ENCODE measurements at regions of chr1 and their contacts with region 1.

Region 1: GRCh38 chr1:87131809-87132283 is 196.8 kb upstream of the LMO4 start:
- H3K4me3 Mint-ChIP-seq: peak overlapping the region; percentile 83
- H3K27ac Mint-ChIP-seq: peak overlapping the region; percentile 64
- H3K4me1 Mint-ChIP-seq: peaks cover 18% of the 10 kb centered on the region
- H3K27me3 Mint-ChIP-seq: peaks cover 4% of the 10 kb centered on the region

Region 2: DNA sequence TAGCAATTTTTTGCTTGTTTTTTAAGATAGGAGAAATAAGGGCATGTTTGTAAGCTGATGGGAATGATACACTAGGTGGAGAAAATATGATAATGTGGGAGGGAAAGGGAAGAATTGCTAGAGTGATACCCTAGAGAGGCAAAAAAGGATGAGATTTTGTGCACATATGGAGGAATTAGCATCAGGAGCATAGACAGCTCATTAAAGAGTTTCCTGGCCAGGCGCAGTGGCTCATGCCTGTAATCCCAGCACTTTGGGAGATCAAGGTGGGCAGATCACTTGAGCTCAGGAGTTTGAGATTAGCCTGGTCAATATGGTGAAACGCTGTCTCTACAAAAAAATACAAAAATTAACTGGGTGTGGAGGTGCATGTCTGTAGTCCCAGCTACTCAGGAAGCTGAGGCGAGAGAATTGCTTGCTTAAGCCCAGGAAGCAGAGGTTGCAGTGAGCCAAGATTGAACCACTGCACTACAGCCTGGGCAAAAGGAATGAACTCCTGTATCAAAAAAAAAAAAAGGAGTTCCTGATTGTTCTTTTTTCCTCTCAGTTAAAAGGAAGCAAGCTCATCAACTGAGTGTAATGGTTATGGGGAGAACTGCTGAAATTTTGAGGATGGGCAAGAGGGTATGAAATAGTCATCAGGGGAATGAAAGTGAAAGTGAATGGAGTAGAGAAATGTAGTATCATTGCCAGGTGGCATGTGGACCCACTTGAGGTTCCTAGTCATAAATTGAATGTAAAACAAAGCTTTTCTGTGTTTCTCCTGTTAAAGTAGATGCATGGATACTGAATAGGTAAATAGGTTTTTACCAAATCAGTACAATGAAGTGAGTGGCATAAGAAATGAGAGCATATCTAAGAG is 392.0 kb before region 1 on chr1:
- intact Hi-C with region 1: no loop called
- H3K4me3 Mint-ChIP-seq: no peak overlapping the region
- H3K27ac Mint-ChIP-seq: no peak overlapping the region
- H3K4me1 Mint-ChIP-seq: peaks cover 6% of the 10 kb centered on the region
- H3K27me3 Mint-ChIP-seq: no peaks in the 10 kb centered on the region

Region 3: GRCh38 chr1:87093286-87093685 is 38.6 kb before region 1 on chr1:
- intact Hi-C with region 1: no loop called
- H3K4me3 Mint-ChIP-seq: no peak overlapping the region
- H3K27ac Mint-ChIP-seq: no peak overlapping the region
- H3K4me1 Mint-ChIP-seq: peaks cover 7% of the 10 kb centered on the region
- H3K27me3 Mint-ChIP-seq: no peaks in the 10 kb centered on the region

Region 4: DNA sequence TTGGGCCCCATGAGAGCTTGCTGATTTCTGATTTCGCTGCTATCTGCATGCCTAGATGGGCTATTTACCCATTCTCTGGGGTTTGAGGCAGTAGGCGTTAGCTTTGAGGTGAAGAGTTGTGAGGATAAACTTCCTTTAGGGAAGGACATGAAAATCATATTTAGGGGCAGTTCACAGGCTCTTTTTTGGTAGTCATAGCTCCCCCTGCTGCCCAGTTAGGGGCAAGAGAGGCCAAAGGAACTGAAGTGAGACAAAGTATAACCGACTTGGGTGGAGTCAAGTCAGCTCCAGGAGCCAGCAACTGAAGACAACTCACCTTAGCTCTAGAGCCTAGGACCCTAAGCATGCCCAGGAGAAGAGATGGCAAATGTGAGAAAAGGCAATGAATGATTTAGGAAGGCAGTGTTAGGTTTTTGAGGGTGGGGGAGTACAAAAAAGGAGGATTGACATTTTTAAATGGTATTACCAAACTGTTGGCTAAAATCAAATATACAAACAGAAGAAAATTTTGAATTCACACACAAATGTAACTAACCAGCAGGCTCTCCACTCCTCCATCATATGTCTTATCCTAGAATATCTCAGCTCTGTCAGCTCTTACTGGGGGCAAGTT is 822.0 kb after region 1 on chr1:
- intact Hi-C with region 1: loop called (anchors 2 kb)
- H3K4me3 Mint-ChIP-seq: no peak overlapping the region
- H3K27ac Mint-ChIP-seq: no peak overlapping the region
- H3K4me1 Mint-ChIP-seq: peaks cover 13% of the 10 kb centered on the region
- H3K27me3 Mint-ChIP-seq: peaks cover 1% of the 10 kb centered on the region

Region 5: DNA sequence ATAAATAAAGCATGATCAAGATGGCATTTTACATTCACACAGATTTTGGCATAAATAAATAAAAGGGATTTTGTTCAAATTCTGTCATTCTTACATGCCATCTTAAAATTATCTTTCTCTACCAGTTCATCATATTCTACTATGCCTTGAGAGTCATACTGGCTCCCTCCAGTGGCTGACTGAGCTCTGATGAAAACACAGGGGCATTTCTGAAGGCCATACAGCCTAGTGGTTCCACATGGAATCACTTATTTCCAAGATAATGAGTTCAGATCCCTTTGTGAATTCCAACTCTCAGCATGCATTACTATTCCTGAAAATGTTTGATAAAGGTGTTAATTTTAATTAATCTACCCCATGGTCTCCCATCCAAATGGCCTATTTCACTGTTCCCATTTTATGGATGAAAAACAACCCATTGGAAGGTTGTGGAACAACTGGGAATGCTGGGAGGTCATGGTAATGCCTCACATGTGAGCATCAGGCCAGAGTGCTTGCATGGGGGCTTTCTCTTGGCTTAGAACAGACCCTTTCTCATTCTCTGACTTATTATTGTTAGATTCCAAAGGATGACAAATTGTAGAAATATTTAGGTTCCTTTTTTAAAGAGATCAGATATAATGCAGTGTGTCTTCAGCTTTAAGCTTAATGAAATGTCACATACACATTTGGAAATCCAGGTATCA is 929.8 kb after region 1 on chr1:
- intact Hi-C with region 1: loop called (anchors 5 kb)
- H3K4me3 Mint-ChIP-seq: no peak overlapping the region
- H3K27ac Mint-ChIP-seq: no peak overlapping the region
- H3K4me1 Mint-ChIP-seq: no peaks in the 10 kb centered on the region
- H3K27me3 Mint-ChIP-seq: no peaks in the 10 kb centered on the region

Measured in dendritic cell treated with granulocyte-macrophage colony-stimulating factor and Interleukin-4, amounts not matched to agents 40 ng/mL and 50 ng/mL, for 4 days (primary cell).